Kidney (tissue), 22 donors: ENCODE measurements at regions of chr19 and their contacts with region 1.

Region 1: GRCh38 chr19:49210108-49210900 is 52.7 kb downstream of the TRPM4 start:
- DNase-seq: peak; percentile 74 to 91 (median 86)
- H3K4me3 ChIP-seq: peak overlapping the region in 1 of 3 donors; percentile 33
- H3K27ac ChIP-seq: no peak overlapping the region
- H3K4me1 ChIP-seq: peaks cover 0 to 2% (median 0%) of the 10 kb centered on the region in 3 donors
- H3K27me3 ChIP-seq: no peaks in the 10 kb centered on the region
- CTCF ChIP-seq: no peak

Region 2: DNA sequence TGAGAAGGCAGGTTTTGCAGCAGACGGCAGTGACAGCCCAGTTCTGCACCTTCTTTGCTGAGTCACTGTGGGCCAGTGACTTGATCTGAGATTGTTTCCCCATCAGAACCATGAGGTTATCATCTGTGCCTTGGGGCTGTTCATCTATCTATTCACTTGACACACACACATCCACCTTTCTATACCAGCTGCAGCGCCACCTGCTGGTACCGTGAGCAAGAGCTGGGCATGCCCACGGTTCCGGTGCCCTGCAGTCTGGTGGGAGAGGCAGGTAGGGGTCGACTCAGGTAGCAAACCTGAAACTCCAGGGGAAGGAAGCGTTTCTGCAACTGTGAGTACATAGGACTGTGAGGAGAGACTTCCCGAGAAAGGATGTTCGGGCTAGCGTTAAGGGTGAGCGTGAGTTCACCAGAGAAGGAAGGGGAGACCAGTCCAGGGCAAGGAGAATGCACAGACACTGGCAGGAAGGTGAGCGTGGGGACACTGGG is 103.6 kb before region 1 on chr19:
- intact Hi-C with region 1: loop called (anchors 10 kb)
- DNase-seq: peak in 2 of 5 donors; percentile 62
- H3K4me3 ChIP-seq: no peak overlapping the region
- H3K27ac ChIP-seq: no peak overlapping the region
- H3K4me1 ChIP-seq: no peaks in the 10 kb centered on the region
- H3K27me3 ChIP-seq: no peaks in the 10 kb centered on the region
- CTCF ChIP-seq: peak; percentile 71